ENCODE measurements at regions of chr12 and their contacts with region 1.

Region 1: DNA sequence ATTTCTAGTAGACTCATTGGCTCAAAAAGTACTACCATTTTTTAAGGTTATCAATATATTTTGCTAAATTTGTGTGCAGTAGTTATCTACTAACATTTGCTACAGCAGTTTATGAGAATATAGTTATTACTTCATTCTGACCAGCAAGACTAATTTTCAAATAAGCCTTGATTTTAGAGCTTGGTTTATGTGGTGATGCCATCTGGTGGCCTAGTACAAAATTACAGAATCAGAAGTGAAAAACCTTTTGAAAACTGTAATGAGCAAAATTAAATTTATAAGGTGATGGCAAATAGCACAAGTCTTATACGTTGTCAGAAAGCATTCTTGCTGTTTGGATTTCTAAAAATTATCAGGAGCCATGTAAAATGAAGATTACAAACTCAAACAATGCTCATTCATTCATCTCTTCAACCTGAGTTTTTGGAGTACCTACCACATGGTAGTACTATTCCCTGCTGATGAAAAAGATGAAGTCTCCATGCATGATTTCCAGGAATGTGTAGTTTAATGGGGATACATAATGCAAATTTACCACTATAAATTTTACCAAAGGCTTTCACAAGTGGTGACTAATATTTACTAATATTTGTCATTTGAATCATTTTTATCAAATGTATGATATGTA is 51.0 kb downstream of the MAGOHB start:
- DNase-seq: no peak
- ATAC-seq: no peak
- H3K4me3 ChIP-seq: no peak overlapping the region
- H3K27ac ChIP-seq: no peak overlapping the region
- H3K4me1 ChIP-seq: no peaks in the 10 kb centered on the region
- H3K27me3 ChIP-seq: peaks cover 0 to 26% (median 0%) of the 10 kb centered on the region in 9 donors
- CTCF ChIP-seq: peak; percentile 59 to 83 (median 73)
- POLR2A ChIP-seq: no peak

Region 2: GRCh38 chr12:10153271-10154144 is 408.9 kb before region 1 on chr12:
- intact Hi-C with region 1: loop called in 4 of 10 experiments (anchors 5 to 10 kb)
- DNase-seq: peak; percentile 62 to 85 (median 71)
- ATAC-seq: peak; percentile 83 to 95 (median 94)
- H3K4me3 ChIP-seq: peak overlapping the region; percentile 34 to 74 (median 65)
- H3K27ac ChIP-seq: peak overlapping the region; percentile 30 to 90 (median 78)
- H3K4me1 ChIP-seq: peaks cover 0 to 14% (median 5%) of the 10 kb centered on the region in 12 donors
- H3K27me3 ChIP-seq: no peaks in the 10 kb centered on the region
- CTCF ChIP-seq: peak; percentile 73 to 90 (median 82)
- POLR2A ChIP-seq: no peak

Region 3: DNA sequence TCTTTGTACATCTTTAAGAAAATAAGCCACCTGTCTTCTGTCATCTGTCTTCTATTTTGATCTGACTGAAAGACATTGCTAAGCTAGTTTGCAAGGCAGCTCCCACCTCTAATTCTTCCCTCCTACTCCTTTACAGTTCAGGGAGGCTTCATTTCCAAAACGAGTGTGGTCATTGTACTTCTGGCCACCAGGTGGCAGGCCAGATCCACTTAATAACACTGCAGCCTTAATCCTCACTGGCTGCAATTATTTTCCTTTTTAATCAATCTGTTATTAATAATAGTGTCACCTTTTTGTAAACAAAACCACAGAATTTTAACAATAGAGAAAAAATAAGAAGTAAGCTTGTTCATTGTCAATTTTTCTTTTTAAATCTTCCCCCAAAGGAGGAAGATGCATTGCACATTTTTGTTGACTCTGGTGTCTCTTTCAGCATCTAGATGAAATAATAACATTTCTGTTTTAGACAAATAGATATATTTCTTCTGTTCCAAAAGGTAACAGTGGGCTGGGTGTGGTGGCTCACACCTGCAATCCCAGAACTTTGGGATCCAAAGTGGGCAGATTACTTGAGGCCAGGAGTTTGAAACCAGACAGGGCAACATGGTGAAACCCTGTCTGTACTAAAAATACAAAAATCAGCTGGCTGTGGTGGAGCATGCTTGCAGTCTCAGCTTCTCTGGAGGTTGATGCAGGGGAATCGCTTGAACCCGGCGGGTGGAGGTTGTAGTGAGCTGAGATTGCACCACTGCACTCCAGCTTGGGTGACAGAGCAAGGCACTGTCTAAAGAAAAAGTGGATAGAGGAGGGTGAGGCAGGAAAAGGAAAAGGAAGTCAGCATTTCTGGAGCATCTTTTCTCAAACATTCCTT is 326.4 kb before region 1 on chr12:
- intact Hi-C with region 1: loop called (anchors 1 to 5 kb)
- DNase-seq: peak in 1 of 5 donors; percentile 35
- ATAC-seq: peak; percentile 54 to 84 (median 81)
- H3K4me3 ChIP-seq: no peak overlapping the region
- H3K27ac ChIP-seq: no peak overlapping the region
- H3K4me1 ChIP-seq: peaks cover 0 to 7% (median 0%) of the 10 kb centered on the region in 12 donors
- H3K27me3 ChIP-seq: no peaks in the 10 kb centered on the region
- CTCF ChIP-seq: peak; percentile 73 to 91 (median 86)
- POLR2A ChIP-seq: no peak

Region 4: GRCh38 chr12:10331642-10332239 is 230.7 kb before region 1 on chr12:
- intact Hi-C with region 1: loop called (anchors 1 to 5 kb)
- DNase-seq: no peak
- ATAC-seq: peak in 3 of 4 donors; percentile 70 to 75 (median 71)
- H3K4me3 ChIP-seq: no peak overlapping the region
- H3K27ac ChIP-seq: no peak overlapping the region
- H3K4me1 ChIP-seq: no peaks in the 10 kb centered on the region
- H3K27me3 ChIP-seq: no peaks in the 10 kb centered on the region
- CTCF ChIP-seq: peak; percentile 43 to 80 (median 64)
- POLR2A ChIP-seq: no peak

Region 5: DNA sequence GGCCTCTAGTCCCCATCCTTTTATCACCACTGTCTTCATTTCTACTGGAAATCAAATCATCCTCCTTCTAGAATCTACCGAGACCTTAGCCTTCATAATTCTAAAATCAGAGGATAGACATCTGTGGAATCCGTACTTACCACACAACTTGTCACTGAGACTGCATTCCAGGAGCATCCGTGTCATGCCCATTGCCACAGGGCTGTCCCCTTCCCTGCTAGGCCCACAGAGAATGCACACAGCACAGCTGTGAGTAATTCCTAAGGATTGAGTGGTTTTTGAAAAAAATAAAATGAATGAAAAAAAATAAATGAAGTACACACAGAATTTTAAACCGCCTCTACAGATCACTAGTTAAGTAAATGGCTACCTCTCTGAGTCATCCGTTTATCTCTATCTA is 72.0 kb after region 1 on chr12:
- intact Hi-C with region 1: no loop called
- DNase-seq: no peak
- ATAC-seq: no peak
- H3K4me3 ChIP-seq: no peak overlapping the region
- H3K27ac ChIP-seq: no peak overlapping the region
- H3K4me1 ChIP-seq: no peaks in the 10 kb centered on the region
- H3K27me3 ChIP-seq: peaks cover 0 to 2% (median 0%) of the 10 kb centered on the region in 9 donors
- CTCF ChIP-seq: no peak
- POLR2A ChIP-seq: no peak